ENCODE measurements at regions of chr12 and their contacts with region 1.

Region 1: DNA sequence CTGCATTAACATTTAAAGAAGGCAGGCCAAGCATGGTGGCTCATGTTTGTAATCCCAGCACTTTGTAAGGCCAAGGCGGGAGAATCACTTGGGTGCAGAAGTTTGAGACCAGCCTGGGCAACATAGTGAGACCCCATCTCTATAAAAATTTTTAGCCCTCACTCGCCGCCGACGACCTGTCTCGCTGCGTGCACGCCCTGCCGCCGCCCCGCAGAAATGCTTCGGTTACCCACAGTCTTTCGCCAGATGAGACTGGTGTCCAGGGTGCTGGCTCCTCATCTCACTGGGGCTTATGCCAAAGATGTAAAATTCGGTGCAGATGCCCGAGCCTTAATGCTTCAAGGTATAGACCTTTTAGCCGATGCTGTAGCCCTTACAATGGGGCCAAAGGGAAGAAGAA is 10.8 kb upstream of the RBMS2 start:
- DNase-seq: no peak
- ATAC-seq: no peak
- H3K4me3 ChIP-seq: no peak overlapping the region
- H3K27ac ChIP-seq: no peak overlapping the region
- H3K4me1 ChIP-seq: peaks cover 4% of the 10 kb centered on the region
- H3K27me3 ChIP-seq: no peaks in the 10 kb centered on the region
- CTCF ChIP-seq: no peak

Region 2: GRCh38 chr12:56425193-56425592 is 85.6 kb before region 1 on chr12:
- intact Hi-C with region 1: no loop called
- DNase-seq: no peak
- ATAC-seq: no peak
- H3K4me3 ChIP-seq: no peak overlapping the region
- H3K27ac ChIP-seq: no peak overlapping the region
- H3K4me1 ChIP-seq: no peaks in the 10 kb centered on the region
- H3K27me3 ChIP-seq: no peaks in the 10 kb centered on the region
- CTCF ChIP-seq: no peak

Region 3: DNA sequence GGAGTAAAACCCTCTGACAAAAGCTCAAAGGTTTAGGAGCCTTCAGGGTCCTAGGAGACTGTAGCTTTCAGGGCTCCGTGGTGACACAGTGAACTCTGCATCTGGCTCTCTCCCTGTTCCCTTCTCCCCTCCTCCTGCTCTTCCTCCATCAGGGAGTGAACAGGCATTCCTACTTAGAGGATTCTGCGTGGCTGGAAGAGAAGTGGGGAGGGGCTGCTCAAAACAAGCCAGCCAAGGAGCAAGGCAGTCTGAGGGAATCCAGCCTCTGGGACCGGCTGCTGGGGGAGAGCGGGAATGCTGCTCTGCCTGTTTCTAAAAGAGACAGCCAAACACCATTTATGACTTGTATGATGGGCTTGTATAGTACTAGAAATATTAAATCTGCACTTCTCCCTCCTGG is 60.3 kb after region 1 on chr12:
- intact Hi-C with region 1: loop called (anchors 1 to 5 kb)
- DNase-seq: no peak
- ATAC-seq: no peak
- H3K4me3 ChIP-seq: no peak overlapping the region
- H3K27ac ChIP-seq: no peak overlapping the region
- H3K4me1 ChIP-seq: peaks cover 13% of the 10 kb centered on the region
- H3K27me3 ChIP-seq: no peaks in the 10 kb centered on the region
- CTCF ChIP-seq: no peak

Region 4: GRCh38 chr12:56593909-56594621 is 83.3 kb after region 1 on chr12:
- intact Hi-C with region 1: loop called in 1 of 2 experiments (anchors 5 kb)
- DNase-seq: peak; percentile 39 to 69
- ATAC-seq: peak; percentile 40 to 61 (median 55)
- H3K4me3 ChIP-seq: no peak overlapping the region
- H3K27ac ChIP-seq: peak overlapping the region; percentile 14
- H3K4me1 ChIP-seq: no peaks in the 10 kb centered on the region
- H3K27me3 ChIP-seq: no peaks in the 10 kb centered on the region
- CTCF ChIP-seq: peak; percentile 66